AG04450 (cell line): ENCODE measurements at regions of chr12 and their contacts with region 1.

Region 1: GRCh38 chr12:96219698-96220206 is 25.6 kb downstream of the ELK3 start:
- DNase-seq: peak; percentile 93
- H3K4me3 ChIP-seq: peak overlapping the region; percentile 25
- H3K27ac ChIP-seq: peak overlapping the region; percentile 98
- H3K27me3 ChIP-seq: no peaks in the 10 kb centered on the region
- CTCF ChIP-seq: no peak

Region 2: DNA sequence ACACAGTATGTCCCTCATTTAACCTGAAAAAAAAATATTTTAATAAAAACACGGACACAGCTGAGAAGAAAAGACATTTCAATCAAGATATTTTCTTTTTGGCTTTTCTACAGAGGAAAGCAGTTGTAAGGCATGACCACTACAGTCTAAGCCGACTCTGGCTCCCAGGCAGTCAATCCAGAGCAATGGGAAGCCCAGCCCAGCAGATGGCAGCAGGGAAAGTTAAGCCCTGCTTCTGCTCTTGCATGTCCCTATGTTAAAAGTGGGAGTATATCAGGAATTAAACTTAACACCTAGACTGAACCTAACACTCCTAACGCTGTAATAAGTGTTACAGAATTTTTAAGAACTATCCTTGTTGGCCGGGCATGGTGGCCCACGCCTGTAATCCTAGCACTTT is 204.1 kb before region 1 on chr12:
- CTCF ChIA-PET with region 1: interaction called, 14 read pairs
- POLR2A ChIA-PET with region 1: no interaction called
- DNase-seq: no peak
- H3K4me3 ChIP-seq: no peak overlapping the region
- H3K27ac ChIP-seq: no peak overlapping the region
- H3K27me3 ChIP-seq: no peaks in the 10 kb centered on the region
- CTCF ChIP-seq: peak; percentile 56

Region 3: DNA sequence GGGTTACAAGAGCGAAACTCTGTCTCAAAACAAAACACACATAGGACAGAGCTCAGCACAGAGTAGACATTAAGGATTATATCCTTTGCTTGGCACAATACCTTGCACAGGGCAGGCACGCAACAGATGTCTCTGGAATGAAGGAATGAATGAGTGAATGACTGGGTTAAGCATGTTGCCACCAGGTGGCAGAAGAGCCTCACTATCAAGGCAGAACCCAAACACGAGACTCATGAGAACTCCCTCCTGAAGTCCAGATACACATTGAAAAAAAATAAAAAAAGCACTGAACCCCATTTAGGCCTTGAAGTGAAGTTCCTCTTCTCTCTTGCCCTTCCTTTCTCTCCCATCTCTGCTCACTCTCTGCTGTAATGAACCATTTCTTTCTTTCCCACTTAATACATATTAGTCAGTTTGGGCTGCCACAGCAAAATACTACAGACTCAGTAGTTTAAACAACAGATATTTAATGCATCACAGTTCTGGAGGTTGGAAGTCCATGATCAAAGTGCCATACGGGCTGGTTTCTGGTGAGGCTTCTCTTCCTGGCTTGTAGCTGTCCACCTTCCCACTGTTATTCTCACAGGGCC is 157.8 kb before region 1 on chr12:
- CTCF ChIA-PET with region 1: interaction called, 158 read pairs
- POLR2A ChIA-PET with region 1: interaction called, 4 read pairs
- DNase-seq: peak; percentile 69
- H3K4me3 ChIP-seq: no peak overlapping the region
- H3K27ac ChIP-seq: no peak overlapping the region
- H3K27me3 ChIP-seq: no peaks in the 10 kb centered on the region
- CTCF ChIP-seq: peak; percentile 84

Region 4: DNA sequence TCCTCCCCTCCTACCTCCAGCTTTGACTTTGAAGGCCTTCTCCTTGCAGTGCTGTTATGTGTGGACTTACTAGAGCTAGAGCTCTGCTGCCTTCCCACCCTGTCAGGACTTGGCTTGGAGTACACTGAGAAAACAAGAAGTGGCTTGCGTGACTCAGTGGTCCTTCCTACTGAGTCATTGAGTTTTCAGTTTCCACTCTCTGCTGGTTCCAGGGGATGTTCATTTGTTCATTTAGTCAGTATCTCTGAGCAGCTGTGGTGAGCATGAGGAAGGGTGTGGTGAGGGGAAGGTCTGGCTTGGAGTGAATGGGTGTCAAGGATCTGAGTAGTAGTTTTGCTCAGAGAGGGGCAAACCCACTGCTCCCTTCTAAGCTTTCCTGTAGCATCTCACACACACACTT is 42.7 kb before region 1 on chr12:
- CTCF ChIA-PET with region 1: interaction called, 13 read pairs
- POLR2A ChIA-PET with region 1: no interaction called
- DNase-seq: no peak
- H3K4me3 ChIP-seq: no peak overlapping the region
- H3K27ac ChIP-seq: no peak overlapping the region
- H3K27me3 ChIP-seq: peaks cover 4% of the 10 kb centered on the region
- CTCF ChIP-seq: no peak

Region 5: GRCh38 chr12:96198965-96199364 is 20.8 kb before region 1 on chr12:
- CTCF ChIA-PET with region 1: interaction called, 72 read pairs
- POLR2A ChIA-PET with region 1: interaction called, 5 read pairs
- DNase-seq: peak; percentile 69
- H3K4me3 ChIP-seq: no peak overlapping the region
- H3K27ac ChIP-seq: no peak overlapping the region
- H3K27me3 ChIP-seq: no peaks in the 10 kb centered on the region
- CTCF ChIP-seq: no peak